ENCODE measurements at regions of chr1 and their contacts with region 1.

Region 1: GRCh38 chr1:162056043-162056442 is 13.4 kb upstream of the NOS1AP start:
- DNase-seq: peak; percentile 70
- H3K27ac ChIP-seq: no peak overlapping the region
- CTCF ChIP-seq: peak; percentile 88

Region 2: GRCh38 chr1:161956097-161956496 is 99.9 kb before region 1 on chr1:
- CTCF ChIA-PET with region 1: no interaction called
- POLR2A ChIA-PET with region 1: no interaction called
- DNase-seq: no peak
- H3K27ac ChIP-seq: no peak overlapping the region
- CTCF ChIP-seq: no peak

Region 3: GRCh38 chr1:162081316-162081715 is 25.3 kb after region 1 on chr1:
- CTCF ChIA-PET with region 1: no interaction called
- POLR2A ChIA-PET with region 1: no interaction called
- DNase-seq: no peak
- H3K27ac ChIP-seq: no peak overlapping the region
- CTCF ChIP-seq: no peak

Region 4: DNA sequence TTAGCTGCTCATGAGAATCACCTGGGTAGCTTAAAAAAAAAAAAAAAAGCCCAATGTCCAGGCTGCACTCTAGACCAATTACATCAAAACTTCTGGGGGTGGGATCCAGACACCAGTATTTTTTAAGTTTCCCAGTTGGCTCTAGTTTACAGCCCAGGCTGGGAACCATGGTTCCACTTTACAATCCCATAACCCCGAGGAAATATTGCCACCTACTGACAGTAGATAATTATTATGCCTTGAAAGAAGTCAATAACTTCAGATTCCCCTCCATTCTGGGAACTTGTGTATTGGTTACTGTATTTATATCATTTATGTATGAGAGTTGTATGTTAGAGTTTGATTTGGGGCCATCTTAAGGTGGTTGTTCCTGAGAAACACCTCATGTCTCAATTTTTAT is 220.4 kb after region 1 on chr1:
- CTCF ChIA-PET with region 1: interaction called, 13 read pairs
- POLR2A ChIA-PET with region 1: no interaction called
- DNase-seq: peak; percentile 42
- H3K27ac ChIP-seq: no peak overlapping the region
- CTCF ChIP-seq: peak; percentile 30

Region 5: DNA sequence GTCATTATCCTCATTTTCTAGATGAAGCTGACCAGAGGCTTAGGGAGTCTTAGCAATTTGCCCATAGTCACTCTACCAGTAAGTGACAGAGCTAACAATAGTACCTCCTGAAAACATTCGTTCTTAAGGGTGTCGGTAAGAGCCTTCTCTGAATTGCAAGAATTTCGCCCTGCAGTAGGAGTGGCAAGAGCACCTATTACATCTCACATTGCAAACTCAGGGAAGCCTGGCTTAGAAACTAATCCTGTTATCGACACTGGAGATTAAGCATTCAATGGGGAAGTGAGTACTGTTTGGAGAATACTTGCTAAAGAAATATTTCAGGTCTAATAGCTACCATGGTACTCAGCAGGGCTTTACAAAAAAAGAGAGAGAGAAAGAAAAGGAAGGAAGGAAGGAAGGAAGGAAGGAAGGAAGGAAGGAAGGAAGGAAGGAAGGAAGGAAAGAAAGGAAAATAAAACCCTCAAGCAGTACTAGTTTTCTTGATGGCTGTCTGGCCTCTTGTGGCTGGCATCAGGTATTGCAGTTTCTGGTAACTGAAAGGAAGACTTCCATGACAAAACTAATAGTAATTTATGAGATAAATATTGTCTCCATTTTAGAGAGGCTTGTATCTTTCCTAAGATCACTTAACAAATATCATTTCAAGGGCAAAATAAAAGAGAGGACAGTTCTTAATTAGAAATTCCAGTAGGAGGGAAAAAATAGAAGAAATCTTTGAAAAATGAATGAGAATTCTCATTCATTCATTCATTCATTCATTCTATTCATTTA is 335.9 kb after region 1 on chr1:
- CTCF ChIA-PET with region 1: interaction called, 12 read pairs
- POLR2A ChIA-PET with region 1: no interaction called
- DNase-seq: no peak
- H3K27ac ChIP-seq: no peak overlapping the region
- CTCF ChIP-seq: peak; percentile 89

Measured in RWPE1 (cell line).